Posterior vena cava (tissue), 2 donors: ENCODE measurements at regions of chr13 and their contacts with region 1.

Region 1: GRCh38 chr13:30957258-30957943 is 24.9 kb downstream of the TEX26 start:
- DNase-seq: no peak

Region 2: GRCh38 chr13:30905932-30906383 is 51.4 kb before region 1 on chr13 and contains the start of gene MEDAG:
- intact Hi-C with region 1: no loop called
- DNase-seq: peak; percentile 98
- total RNA-seq, gene MEDAG: 151 to 172 TPM

Region 3: DNA sequence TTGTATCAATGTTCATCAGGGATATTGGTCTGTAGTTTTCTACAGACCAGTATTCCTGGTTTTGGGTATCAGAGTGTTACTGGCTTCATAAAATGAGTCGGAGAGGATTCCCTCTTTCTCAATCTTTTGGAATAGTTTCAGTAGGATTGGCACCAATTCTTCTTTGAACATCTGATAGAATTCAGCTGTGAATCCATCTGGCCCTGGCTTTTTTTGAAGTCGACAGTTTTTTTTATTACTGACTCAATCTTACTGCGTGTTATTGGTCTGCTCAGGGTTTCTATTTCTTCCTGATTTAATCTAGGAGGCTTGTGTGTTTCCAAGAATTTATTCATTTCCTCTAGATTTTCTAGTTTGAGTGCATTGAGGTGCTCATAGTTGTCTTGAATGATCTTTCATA is 13.5 kb before region 1 on chr13:
- intact Hi-C with region 1: loop called in 1 of 2 experiments (anchors 1 kb)
- DNase-seq: no peak